Sigmoid colon (tissue), 7 donors: ENCODE measurements at regions of chr6 and their contacts with region 1.

Region 1: GRCh38 chr6:3990692-3991501 is 88.0 kb downstream of the FAM217A start:
- DNase-seq: peak; percentile 96
- H3K4me3 ChIP-seq: peak overlapping the region; percentile 33 to 52 (median 49)
- H3K27ac ChIP-seq: peak overlapping the region; percentile 75 to 84 (median 78)
- H3K4me1 ChIP-seq: peaks cover 0 to 22% (median 14%) of the 10 kb centered on the region in 4 donors
- H3K27me3 ChIP-seq: no peaks in the 10 kb centered on the region
- CTCF ChIP-seq: peak; percentile 69 to 82 (median 76)
- EP300 ChIP-seq: no peak
- POLR2A ChIP-seq: no peak

Region 2: GRCh38 chr6:3281631-3282475 is 709.0 kb before region 1 on chr6:
- intact Hi-C with region 1: loop called (anchors 5 kb)
- DNase-seq: peak; percentile 66
- H3K4me3 ChIP-seq: no peak overlapping the region
- H3K27ac ChIP-seq: peak overlapping the region; percentile 38 to 75 (median 71)
- H3K4me1 ChIP-seq: peaks cover 0 to 55% (median 40%) of the 10 kb centered on the region in 4 donors
- H3K27me3 ChIP-seq: no peaks in the 10 kb centered on the region
- CTCF ChIP-seq: no peak
- EP300 ChIP-seq: no peak
- POLR2A ChIP-seq: no peak

Region 3: DNA sequence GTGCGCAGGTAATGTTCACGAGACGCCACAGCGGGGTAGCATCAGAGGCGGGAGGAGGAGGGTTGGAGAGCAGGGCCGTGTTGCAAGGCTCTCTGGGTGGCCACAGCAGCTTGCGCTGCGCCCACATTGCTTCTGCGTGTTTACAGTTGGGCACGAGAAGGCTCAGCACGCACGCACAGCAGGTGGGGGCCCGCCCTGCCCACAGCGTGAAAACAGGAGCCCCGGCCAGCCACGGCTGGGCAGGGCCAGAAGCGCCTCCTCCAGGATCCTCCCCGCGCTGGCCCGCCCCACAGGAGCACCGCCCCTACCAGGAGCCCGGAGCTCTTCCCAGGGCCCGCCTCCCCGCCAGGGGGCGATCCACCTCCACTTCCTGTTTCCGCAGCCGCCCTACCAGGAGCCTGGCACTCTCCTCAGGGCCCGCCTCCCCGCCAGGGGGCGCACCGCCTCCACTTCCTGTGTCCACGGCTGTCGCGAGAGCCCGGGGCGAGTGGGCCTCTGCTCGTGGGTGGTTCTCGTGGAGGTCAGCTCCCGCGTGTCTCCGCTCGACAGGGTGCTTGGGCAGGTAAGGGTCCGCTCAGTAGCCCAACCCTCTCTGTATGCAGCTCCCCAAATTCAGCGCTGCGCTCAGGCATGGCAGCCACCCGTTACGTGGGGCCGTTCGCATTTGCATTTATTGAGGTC is 141.8 kb before region 1 on chr6 and contains the start of gene FAM50B:
- intact Hi-C with region 1: loop called (anchors 1 kb)
- DNase-seq: peak; percentile 96
- H3K4me3 ChIP-seq: peak within 1 kb of the TSS; percentile 39 to 55 (median 49)
- H3K27ac ChIP-seq: peak within 1 kb of the TSS; percentile 67 to 80 (median 73)
- H3K4me1 ChIP-seq: peaks cover 0 to 25% (median 8%) of the 10 kb centered on the region in 4 donors
- H3K27me3 ChIP-seq: no peaks in the 10 kb centered on the region
- CTCF ChIP-seq: peak; percentile 83 to 99 (median 96)
- EP300 ChIP-seq: no peak
- POLR2A ChIP-seq: no peak
- total RNA-seq, gene FAM50B: 9.6 to 16.1 (median 13.3) TPM

Region 4: GRCh38 chr6:3929281-3929798 is 61.6 kb before region 1 on chr6:
- intact Hi-C with region 1: loop called (anchors 5 kb)
- DNase-seq: peak; percentile 75
- H3K4me3 ChIP-seq: no peak overlapping the region
- H3K27ac ChIP-seq: peak overlapping the region; percentile 39 to 75 (median 66)
- H3K4me1 ChIP-seq: peaks cover 0 to 33% (median 18%) of the 10 kb centered on the region in 4 donors
- H3K27me3 ChIP-seq: no peaks in the 10 kb centered on the region
- CTCF ChIP-seq: no peak
- EP300 ChIP-seq: peak in 1 of 4 donors; percentile 27
- POLR2A ChIP-seq: no peak

Region 5: DNA sequence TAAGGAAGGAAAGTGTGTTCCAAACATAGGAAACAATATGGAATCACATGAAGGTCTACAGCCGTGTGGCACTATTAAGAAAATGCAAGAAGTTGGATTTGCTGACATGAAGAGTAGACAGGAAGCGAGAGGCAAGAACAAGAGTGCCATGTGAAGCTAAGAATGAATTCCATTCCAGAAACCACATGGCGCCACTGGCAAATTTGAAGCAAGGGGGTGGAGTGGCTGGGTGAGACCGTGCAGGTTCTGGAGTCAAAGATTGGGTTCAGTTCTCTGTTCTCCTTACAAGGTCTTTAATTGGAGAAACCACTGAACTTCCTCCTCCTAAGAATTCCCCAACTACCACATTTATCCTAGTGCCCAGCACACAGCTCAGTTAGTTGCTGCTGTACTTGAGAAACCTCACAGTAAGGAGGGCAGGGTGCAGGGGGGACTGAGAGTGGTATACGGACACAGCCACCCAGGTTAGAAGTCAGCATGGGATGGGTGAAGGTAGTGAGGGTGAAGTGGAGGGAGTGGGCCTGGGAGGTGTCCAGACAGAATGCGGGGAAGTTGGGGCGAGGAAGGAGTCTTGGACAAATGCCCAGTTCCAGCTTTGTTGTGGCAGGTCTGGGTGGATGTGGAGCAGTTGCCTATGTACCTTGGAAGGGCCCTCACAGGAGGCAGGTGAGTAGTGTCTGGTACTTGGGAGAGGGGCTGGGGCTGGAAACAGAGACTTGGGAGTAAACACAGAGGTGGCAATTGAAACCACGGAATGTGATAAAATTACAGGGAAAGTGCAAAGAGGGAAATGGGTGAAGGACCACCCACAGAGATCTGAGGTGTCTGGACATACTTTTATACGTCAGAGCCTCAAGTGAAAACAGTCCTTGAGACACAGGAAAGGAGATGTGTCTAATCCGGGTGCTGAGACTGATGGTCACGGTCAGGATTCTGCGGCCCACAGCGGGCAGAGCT is 1255.5 kb after region 1 on chr6:
- intact Hi-C with region 1: no loop called
- DNase-seq: no peak
- H3K4me3 ChIP-seq: no peak overlapping the region
- H3K27ac ChIP-seq: no peak overlapping the region
- H3K4me1 ChIP-seq: no peaks in the 10 kb centered on the region
- H3K27me3 ChIP-seq: no peaks in the 10 kb centered on the region
- CTCF ChIP-seq: no peak
- EP300 ChIP-seq: no peak
- POLR2A ChIP-seq: no peak